Caco-2 (cell line): ENCODE measurements at regions of chr12 and their contacts with region 1.

Region 1: GRCh38 chr12:95217377-95218149 is at the starts of genes FGD6 and VEZT:
- DNase-seq: peak; percentile 99
- H3K4me3 ChIP-seq: peak within 1 kb of the TSS; percentile 84
- H3K4me3 Mint-ChIP-seq: peak within 1 kb of the TSS; percentile 81
- H3K27ac Mint-ChIP-seq: peak within 1 kb of the TSS; percentile 88
- H3K4me1 ChIP-seq: peaks cover 15% of the 10 kb centered on the region; the same call in 1 of the 2 replicates
- H3K4me1 Mint-ChIP-seq: peaks cover 23% of the 10 kb centered on the region
- H3K27me3 ChIP-seq: no peaks in the 10 kb centered on the region
- H3K27me3 Mint-ChIP-seq: no peaks in the 10 kb centered on the region
- CTCF ChIP-seq: peak in 1 of 2 experiments; percentile 30
- total RNA-seq, gene FGD6: 23.5 and 25.1 TPM in 2 replicates
- total RNA-seq, gene VEZT: 76.9 and 77.4 TPM in 2 replicates

Region 2: GRCh38 chr12:95117178-95117599 is 100.4 kb before region 1 on chr12:
- CTCF ChIA-PET with region 1: interaction called, 10 read pairs
- POLR2A ChIA-PET with region 1: interaction called, 5 read pairs
- intact Hi-C with region 1: loop called (anchors 1 kb)
- DNase-seq: peak; percentile 57 to 68
- H3K4me3 ChIP-seq: no peak overlapping the region
- H3K4me3 Mint-ChIP-seq: no peak overlapping the region
- H3K27ac Mint-ChIP-seq: no peak overlapping the region
- H3K4me1 ChIP-seq: 0 out of 2 replicates have a peak, but pooled peaks cover 4% of the 10 kb centered on the region
- H3K4me1 Mint-ChIP-seq: no peaks in the 10 kb centered on the region
- H3K27me3 ChIP-seq: no peaks in the 10 kb centered on the region
- H3K27me3 Mint-ChIP-seq: no peaks in the 10 kb centered on the region
- CTCF ChIP-seq: peak; percentile 48 to 74

Region 3: GRCh38 chr12:95179016-95179415 is 38.5 kb before region 1 on chr12:
- CTCF ChIA-PET with region 1: no interaction called
- POLR2A ChIA-PET with region 1: no interaction called
- intact Hi-C with region 1: loop called (anchors 2 kb)
- DNase-seq: no peak
- H3K4me3 ChIP-seq: no peak overlapping the region
- H3K4me3 Mint-ChIP-seq: no peak overlapping the region
- H3K27ac Mint-ChIP-seq: no peak overlapping the region
- H3K4me1 ChIP-seq: peaks cover 17% of the 10 kb centered on the region
- H3K4me1 Mint-ChIP-seq: peaks cover 9% of the 10 kb centered on the region
- H3K27me3 ChIP-seq: no peaks in the 10 kb centered on the region
- H3K27me3 Mint-ChIP-seq: no peaks in the 10 kb centered on the region
- CTCF ChIP-seq: no peak

Region 4: GRCh38 chr12:95204141-95204866 is 13.3 kb before region 1 on chr12:
- CTCF ChIA-PET with region 1: interaction called, 5 read pairs
- POLR2A ChIA-PET with region 1: interaction called, 4 read pairs
- intact Hi-C with region 1: loop called (anchors 1 kb)
- DNase-seq: peak; percentile 89 to 96
- H3K4me3 ChIP-seq: no peak overlapping the region
- H3K4me3 Mint-ChIP-seq: peak overlapping the region; percentile 62
- H3K27ac Mint-ChIP-seq: peak overlapping the region; percentile 82
- H3K4me1 ChIP-seq: peaks cover 61% of the 10 kb centered on the region
- H3K4me1 Mint-ChIP-seq: peaks cover 52% of the 10 kb centered on the region
- H3K27me3 ChIP-seq: no peaks in the 10 kb centered on the region
- H3K27me3 Mint-ChIP-seq: no peaks in the 10 kb centered on the region
- CTCF ChIP-seq: no peak

Region 5: DNA sequence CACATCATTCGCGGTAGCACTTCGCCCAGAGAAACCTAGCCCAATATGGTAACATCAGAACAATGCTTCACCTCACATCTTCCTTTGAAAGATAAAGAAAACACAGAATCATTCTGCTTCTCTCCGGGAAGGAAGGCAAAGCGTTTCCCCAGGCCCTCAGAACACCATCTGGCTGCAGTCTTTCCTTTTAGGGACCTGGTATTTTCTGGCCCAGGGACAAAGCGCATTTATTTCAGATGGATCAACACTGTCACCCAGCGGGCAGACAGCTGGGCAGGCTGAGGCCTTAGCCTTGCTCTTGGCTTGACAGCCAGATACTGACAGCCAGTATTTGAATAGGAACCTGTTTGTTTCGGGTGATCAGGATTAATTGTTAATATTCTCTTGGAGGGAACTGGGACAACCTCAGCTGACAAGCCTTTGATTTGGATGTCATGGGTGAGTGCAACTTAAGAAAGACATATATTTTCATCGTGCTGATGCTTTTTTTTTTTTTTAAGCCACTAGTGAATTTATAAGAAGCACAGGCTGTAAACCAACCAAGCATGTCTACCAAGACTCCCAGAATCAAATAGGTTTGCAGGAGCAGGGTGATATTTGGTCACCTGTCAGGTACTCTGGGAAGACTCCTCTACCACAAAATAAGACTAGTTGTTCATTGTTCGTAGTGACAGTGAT is 119.0 kb after region 1 on chr12:
- CTCF ChIA-PET with region 1: interaction called, 11 read pairs
- POLR2A ChIA-PET with region 1: interaction called, 3 read pairs
- intact Hi-C with region 1: loop called (anchors 1 kb)
- DNase-seq: peak; percentile 84 to 85
- H3K4me3 ChIP-seq: no peak overlapping the region
- H3K4me3 Mint-ChIP-seq: peak overlapping the region; percentile 56
- H3K27ac Mint-ChIP-seq: peak overlapping the region; percentile 82
- H3K4me1 ChIP-seq: peaks cover 56% of the 10 kb centered on the region
- H3K4me1 Mint-ChIP-seq: peaks cover 26% of the 10 kb centered on the region
- H3K27me3 ChIP-seq: no peaks in the 10 kb centered on the region
- H3K27me3 Mint-ChIP-seq: no peaks in the 10 kb centered on the region
- CTCF ChIP-seq: peak; percentile 66 to 91